Activated naive CD4-positive, alpha-beta T cell treated with anti-CD3 and anti-CD28 coated beads for 36 hours (primary cell): ENCODE measurements at regions of chr3 and their contacts with region 1.

Region 1: DNA sequence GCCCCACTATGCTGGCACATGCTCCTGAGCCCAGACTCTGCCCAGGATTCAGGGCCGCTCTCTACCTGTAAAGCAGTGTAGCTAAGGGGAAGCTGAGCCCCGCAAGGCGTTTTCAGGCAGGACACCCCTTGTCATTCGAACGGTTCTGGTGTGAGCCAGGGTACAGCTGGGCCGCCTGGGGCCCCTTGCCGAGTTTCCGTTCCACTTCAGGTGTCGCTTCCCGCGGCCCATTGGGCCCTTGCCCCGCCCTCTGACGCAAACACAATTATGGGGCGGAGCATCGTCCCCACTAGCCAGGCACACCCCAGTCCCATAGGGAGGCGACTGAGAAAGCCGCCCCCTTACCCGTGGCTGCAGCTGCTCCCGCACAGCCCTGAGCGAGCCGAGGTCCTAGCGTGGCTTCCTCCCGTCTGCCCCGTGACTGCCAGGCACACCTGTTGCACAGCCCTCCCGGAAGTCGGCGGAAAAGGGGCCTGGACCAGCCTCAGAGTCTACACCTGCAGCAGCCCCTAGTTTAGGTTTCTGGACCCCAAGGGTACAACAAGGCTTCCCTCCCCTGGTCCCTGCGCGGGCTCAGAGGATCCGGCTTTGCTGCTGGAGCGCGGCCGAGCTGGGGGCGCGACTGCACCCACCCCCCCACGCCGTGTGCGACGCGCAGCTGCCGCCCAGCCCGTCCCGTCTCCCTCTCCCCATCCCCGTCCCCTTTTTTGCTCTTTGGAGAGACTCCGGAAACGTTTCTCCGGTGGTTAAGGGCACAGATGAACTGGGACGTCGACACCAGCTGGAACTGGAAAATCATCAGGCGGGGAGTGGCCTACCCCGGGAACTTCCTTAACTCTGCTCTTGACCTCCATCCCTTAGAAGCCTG is at the start of gene PLSCR2:
- DNase-seq: peak; percentile 81
- H3K4me3 Mint-ChIP-seq: peak within 1 kb of the TSS; percentile 73
- H3K27ac Mint-ChIP-seq: peak within 1 kb of the TSS; percentile 78
- H3K4me1 Mint-ChIP-seq: peaks cover 2% of the 10 kb centered on the region
- H3K27me3 Mint-ChIP-seq: no peaks in the 10 kb centered on the region
- total RNA-seq, gene PLSCR2: not detected

Region 2: DNA sequence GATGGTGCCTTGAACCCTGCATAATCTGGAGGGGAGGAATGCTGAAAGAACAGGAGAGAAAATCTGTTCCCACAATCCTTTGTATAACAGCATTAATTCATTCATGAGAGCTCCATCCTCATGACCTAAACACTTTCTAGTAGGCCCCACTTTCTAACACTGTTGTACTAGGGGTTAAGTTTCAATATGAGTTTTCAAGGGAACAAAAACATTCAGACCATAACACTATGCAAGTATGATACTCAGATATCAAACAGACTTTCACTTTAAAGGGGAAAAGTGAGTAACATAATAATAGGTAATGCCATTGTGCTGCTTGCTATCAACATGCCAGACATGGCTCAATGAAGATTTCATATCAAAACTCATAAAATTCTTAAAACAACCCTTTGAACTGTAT is 32.4 kb after region 1 on chr3:
- CTCF ChIA-PET with region 1: no interaction called
- intact Hi-C with region 1: loop called (anchors 1 kb)
- DNase-seq: no peak
- H3K4me3 Mint-ChIP-seq: no peak overlapping the region
- H3K27ac Mint-ChIP-seq: no peak overlapping the region
- H3K4me1 Mint-ChIP-seq: peaks cover 19% of the 10 kb centered on the region
- H3K27me3 Mint-ChIP-seq: no peaks in the 10 kb centered on the region